Posterior vena cava (tissue), 2 donors: ENCODE measurements at regions of chr11 and their contacts with region 1.

Region 1: DNA sequence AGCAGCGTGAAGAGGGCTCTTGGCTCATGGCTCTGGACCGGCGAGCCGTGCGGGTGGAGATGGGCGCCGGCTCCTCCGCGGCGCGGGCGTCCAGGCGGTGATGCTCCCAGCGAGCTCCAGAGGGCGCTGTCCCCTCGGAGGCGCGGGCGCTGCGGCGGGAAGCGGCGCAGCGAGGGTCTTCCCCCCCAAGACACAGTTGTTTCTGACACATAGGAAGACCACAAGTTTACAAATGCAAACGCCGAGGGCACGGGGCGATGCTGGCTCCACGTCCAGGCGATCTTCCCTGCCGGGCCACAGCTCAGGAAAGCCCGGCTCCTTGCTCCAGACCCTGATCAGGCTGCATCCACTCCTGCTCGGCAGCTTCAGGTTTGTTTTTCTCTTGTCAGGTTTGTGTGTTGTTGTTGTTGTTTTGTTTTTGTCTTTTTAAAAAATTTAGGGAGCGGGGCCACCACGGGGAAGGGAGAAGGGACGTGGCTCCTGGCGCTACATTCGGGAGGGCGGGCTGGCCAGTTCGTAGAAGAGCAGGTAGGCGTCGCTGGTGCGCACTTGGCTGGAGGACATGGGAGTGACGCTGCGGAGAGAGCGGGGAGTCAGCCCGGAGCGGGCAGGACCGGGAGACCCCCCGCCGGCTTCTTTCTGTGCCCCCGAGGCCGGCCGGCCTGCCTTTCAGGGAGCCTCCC is 10.0 kb upstream of the MFRP start:
- DNase-seq: peak; percentile 96

Region 2: GRCh38 chr11:118152552-118153471 is 1203.7 kb before region 1 on chr11 and contains the start of gene SCN4B:
- intact Hi-C with region 1: no loop called
- DNase-seq: no peak
- total RNA-seq, gene SCN4B: 3.5 to 9.8 TPM

Region 3: DNA sequence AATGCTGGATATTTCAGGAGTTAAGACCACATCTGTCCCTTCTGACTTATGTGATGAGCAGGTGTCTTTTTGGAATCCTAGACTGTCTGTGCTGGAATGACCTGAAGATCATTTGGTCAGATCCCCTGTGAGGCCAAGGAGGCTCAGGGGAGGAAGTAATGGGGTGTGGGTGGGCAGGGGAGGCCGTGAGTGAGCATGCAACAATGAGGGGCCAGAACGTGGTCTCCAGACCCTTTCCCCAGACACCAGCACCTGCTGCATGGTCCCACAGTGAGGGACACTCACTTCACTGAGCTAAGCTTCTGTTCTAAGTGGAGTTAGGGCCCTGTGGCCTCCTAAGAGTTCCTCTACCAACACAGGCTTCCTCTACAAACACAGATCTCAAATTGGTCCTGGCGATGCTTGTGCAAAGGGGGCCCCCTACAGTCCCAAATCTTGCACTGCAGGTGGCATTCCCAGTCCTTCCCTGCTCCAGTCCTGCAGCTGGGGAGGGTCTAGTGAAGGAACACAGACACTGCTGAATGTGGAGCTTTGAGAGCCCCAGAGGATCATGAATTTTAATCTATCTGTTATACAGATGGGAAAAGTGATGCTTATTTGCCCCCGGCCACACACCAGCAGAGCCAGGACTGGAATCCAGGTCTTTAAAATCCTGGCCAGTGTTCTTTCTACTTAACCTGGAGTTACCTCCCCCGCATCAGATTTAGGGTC is 17.6 kb after region 1 on chr11:
- intact Hi-C with region 1: loop called in 1 of 2 experiments (anchors 2 kb)
- DNase-seq: peak; percentile 92

Region 4: DNA sequence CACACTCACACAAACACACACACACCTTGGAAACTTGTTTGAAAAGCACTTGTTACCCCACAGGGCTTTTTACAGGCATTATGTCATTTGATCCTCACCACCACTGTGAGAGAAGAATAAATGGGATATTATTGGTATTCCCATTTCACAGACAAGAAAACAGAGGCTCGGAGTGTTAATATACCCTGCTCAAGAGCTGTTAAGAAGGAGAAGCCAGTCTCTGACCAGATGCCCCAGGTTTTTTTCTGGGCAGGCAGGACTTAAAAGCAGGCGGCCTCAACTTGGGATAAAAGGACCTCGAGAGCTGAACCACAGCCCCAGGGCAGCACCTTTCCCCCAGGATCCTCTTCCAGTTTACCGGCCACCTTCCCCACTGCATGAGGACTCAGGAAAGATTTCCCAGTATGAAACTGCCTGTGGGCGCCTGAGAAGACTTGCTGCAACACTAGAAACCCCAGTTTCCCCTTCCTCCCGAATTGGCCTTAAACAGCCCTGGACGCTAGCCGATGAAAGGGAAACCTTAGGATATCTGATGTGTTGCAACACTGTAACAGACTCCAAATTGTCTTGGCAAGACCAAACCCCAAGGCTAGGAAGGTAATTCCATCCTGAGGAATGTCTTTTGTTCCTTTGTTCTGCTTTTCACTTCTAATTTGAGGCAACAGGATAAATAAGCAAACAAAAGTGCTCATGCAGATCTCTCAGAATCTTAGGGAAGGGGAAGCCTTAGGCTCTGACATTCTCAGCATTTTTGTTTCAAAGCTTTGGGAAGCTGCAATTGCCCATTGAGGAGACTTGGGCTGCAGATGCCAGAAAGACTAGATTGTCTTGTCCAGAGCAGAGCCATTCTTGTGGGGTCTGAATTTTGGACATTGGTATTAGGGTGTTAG is 607.9 kb after region 1 on chr11:
- intact Hi-C with region 1: no loop called
- DNase-seq: no peak